ENCODE measurements at regions of chr1 and their contacts with region 1.

Region 1: GRCh38 chr1:32255072-32256071 is 4.3 kb downstream of the LCK start:
- DNase-seq: peak; percentile 75
- ATAC-seq: peak; percentile 33; the same call in 2 of the 3 replicates
- H3K4me3 ChIP-seq: peak overlapping the region in 1 of 3 experiments; percentile 35; a peak in 1 of 6 replicates
- H3K27ac ChIP-seq: no peak overlapping the region
- H3K4me1 ChIP-seq: peaks cover 75% of the 10 kb centered on the region
- H3K27me3 ChIP-seq: no peaks in the 10 kb centered on the region
- CTCF ChIP-seq: no peak
- EP300 ChIP-seq: 0 out of 4 replicates have a peak, but pooled peaks of 1 of the 2 experiments have one; percentile 18
- POLR2A ChIP-seq: no peak
- RAD21 ChIP-seq: no peak

Region 2: GRCh38 chr1:32031578-32032274 is 223.6 kb before region 1 on chr1:
- CTCF ChIA-PET with region 1: no interaction called
- POLR2A ChIA-PET with region 1: no interaction called
- in situ Hi-C with region 1: no loop called
- intact Hi-C with region 1: no loop called
- DNase-seq: no peak
- ATAC-seq: no peak
- H3K4me3 ChIP-seq: no peak overlapping the region
- H3K27ac ChIP-seq: no peak overlapping the region
- H3K4me1 ChIP-seq: no peaks in the 10 kb centered on the region
- H3K27me3 ChIP-seq: no peaks in the 10 kb centered on the region
- CTCF ChIP-seq: no peak
- EP300 ChIP-seq: no peak
- POLR2A ChIP-seq: no peak
- RAD21 ChIP-seq: no peak

Region 3: GRCh38 chr1:32186491-32186890 is 68.9 kb before region 1 on chr1:
- CTCF ChIA-PET with region 1: no interaction called
- POLR2A ChIA-PET with region 1: no interaction called
- in situ Hi-C with region 1: no loop called
- intact Hi-C with region 1: no loop called
- DNase-seq: no peak
- ATAC-seq: no peak
- H3K4me3 ChIP-seq: no peak overlapping the region
- H3K27ac ChIP-seq: no peak overlapping the region
- H3K4me1 ChIP-seq: peaks cover 39% of the 10 kb centered on the region
- H3K27me3 ChIP-seq: no peaks in the 10 kb centered on the region
- CTCF ChIP-seq: no peak
- EP300 ChIP-seq: no peak
- POLR2A ChIP-seq: no peak
- RAD21 ChIP-seq: no peak

Region 4: DNA sequence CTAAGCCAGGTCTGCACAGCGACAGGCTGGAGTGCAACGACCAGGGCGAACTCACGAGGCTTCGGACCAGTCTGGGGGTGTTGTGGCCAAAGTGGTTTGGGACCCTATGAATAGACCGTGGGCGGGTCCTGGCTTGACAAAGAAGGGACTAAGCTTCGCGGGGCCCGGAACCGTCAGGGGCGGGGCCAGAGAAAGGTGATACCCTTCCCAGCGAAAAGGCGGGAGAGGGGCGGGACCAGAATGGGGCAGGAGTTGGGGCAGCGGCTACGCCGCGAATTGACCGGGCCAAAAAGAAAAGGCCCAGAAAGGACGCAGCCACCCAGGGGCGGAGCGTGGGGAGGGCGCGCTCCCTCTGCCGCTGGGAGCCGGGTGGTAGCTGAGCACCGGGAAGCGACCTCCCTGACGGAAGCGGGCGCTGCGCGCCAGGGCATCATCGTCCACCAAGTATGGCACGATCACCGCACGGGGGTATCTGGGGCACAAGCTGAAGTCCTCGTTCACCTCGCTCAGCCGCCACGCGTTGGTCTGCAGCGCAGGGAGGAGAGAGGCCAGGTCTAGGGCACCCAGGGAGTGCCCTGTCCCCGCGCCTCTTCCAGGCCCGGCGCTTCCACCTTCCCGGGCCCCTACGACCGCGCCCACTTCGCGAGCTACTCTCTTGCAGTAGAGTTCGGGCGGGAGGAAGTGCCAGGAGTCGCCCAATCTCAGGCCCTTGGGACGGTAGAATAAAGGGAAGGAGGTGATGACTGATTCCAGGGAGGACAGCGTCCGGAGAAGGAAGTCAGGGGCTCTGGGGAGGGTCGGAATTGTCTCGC is 15.0 kb before region 1 on chr1:
- CTCF ChIA-PET with region 1: no interaction called
- POLR2A ChIA-PET with region 1: interaction called, 28 read pairs
- in situ Hi-C with region 1: no loop called
- intact Hi-C with region 1: no loop called
- DNase-seq: no peak
- ATAC-seq: no peak
- H3K4me3 ChIP-seq: peak overlapping the region; percentile 42 to 57 (median 56); a peak in 3 of 6 replicates
- H3K27ac ChIP-seq: no peak overlapping the region
- H3K4me1 ChIP-seq: peaks cover 44% of the 10 kb centered on the region
- H3K27me3 ChIP-seq: no peaks in the 10 kb centered on the region
- CTCF ChIP-seq: no peak
- EP300 ChIP-seq: no peak
- POLR2A ChIP-seq: no peak
- RAD21 ChIP-seq: no peak

Region 5: DNA sequence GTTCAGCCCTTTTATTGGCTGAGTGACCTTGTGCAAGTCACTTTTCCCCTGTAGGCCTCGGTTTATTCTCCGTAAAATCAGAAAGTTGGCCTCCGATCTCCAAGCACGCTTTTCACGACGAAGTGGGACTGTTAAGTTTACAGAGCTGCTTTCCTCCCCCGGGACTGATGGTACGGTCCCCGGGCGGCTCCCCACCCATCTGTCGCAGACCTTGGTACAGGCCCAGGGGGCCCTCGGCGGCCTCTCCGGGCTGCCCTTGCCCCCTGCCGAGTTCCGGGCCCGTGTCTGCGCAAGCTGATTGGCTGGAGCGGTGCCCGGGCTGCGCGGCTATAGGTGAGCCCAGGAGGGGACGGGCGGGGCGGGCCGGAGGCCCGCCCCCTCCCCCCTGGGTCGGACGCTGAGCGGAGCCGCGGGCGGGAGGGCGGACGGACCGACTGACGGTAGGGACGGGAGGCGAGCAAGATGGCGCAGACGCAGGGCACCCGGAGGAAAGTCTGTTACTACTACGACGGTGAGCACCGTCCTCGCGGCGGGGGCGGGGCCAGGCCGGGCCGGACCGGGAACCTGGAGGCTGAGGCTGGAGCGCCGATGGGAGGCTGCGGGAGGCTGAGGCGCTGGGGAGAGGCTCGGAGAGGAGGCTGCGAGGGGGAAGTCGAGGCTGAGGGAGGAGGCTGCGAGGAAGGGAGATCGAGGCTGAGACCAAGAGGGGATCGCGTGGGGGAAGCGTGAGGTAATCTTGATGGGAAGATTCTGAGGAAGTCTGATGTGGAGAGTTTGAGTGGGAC is 36.5 kb after region 1 on chr1 and contains the start of gene HDAC1:
- CTCF ChIA-PET with region 1: no interaction called
- POLR2A ChIA-PET with region 1: interaction called, 48 read pairs
- in situ Hi-C with region 1: no loop called
- intact Hi-C with region 1: no loop called
- DNase-seq: peak; percentile 93
- ATAC-seq: peak; percentile 98
- H3K4me3 ChIP-seq: peak within 1 kb of the TSS; percentile 94 to 99 (median 98)
- H3K27ac ChIP-seq: peak within 1 kb of the TSS; percentile 67
- H3K4me1 ChIP-seq: peaks cover 64% of the 10 kb centered on the region
- H3K27me3 ChIP-seq: no peaks in the 10 kb centered on the region; a peak in 1 of 5 replicates
- CTCF ChIP-seq: no peak; the same call in 1 of the 2 replicates
- EP300 ChIP-seq: peak in 1 of 2 experiments; percentile 50; a peak in 2 of 4 replicates
- POLR2A ChIP-seq: peak; percentile 28 to 85; a peak in 3 of 4 replicates
- RAD21 ChIP-seq: 0 out of 2 replicates have a peak, but pooled peaks have one; percentile 10
- total RNA-seq, gene HDAC1: 93.5 and 109 TPM in 2 replicates

Region 6: DNA sequence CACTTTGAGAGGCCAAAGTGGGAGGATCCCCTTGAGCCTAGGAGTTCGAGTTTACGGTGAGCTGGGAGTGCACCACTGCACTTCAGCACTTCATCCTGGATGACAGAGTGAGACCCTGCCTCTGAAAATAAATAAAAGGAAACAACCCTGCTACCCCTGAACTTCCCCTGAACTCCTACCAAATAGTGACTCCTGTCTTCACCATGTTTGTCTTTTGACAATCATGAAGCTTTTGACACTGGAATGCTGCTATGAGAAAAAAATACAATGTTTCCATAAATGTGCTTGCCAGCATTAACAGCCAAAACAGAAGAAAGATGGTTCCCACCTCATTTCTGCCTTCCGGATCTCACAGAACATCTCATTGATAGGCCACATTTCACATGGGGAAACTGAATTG is 294.2 kb after region 1 on chr1:
- CTCF ChIA-PET with region 1: no interaction called
- POLR2A ChIA-PET with region 1: no interaction called
- in situ Hi-C with region 1: no loop called
- intact Hi-C with region 1: no loop called
- DNase-seq: no peak
- ATAC-seq: no peak
- H3K4me3 ChIP-seq: no peak overlapping the region
- H3K27ac ChIP-seq: no peak overlapping the region
- H3K4me1 ChIP-seq: peaks cover 12% of the 10 kb centered on the region
- H3K27me3 ChIP-seq: no peaks in the 10 kb centered on the region
- CTCF ChIP-seq: no peak
- EP300 ChIP-seq: no peak
- POLR2A ChIP-seq: no peak
- RAD21 ChIP-seq: no peak

Measured in HepG2 (cell line).